Cardiac septum (tissue), 1 donor: ENCODE measurements at regions of chr1 and their contacts with region 1.

Region 1: GRCh38 chr1:229258031-229258756 is 12.7 kb upstream of the RAB4A start:
- DNase-seq: no peak

Region 2: GRCh38 chr1:229514578-229515275 is 256.5 kb after region 1 on chr1:
- intact Hi-C with region 1: loop called (anchors 1 kb)
- DNase-seq: no peak